ENCODE measurements at regions of chr2 and their contacts with region 1.

Region 1: GRCh38 chr2:73071360-73072133 is at the start of gene SFXN5:
- DNase-seq: peak; percentile 94
- ATAC-seq: peak; percentile 91
- H3K4me3 ChIP-seq: peak within 1 kb of the TSS; percentile 99
- H3K27ac ChIP-seq: peak within 1 kb of the TSS; percentile 63
- H3K4me1 ChIP-seq: peaks cover 22% of the 10 kb centered on the region
- H3K27me3 ChIP-seq: no peaks in the 10 kb centered on the region
- CTCF ChIP-seq: no peak
- total RNA-seq, gene SFXN5: 22.0 and 30.7 TPM in 2 replicates

Region 2: DNA sequence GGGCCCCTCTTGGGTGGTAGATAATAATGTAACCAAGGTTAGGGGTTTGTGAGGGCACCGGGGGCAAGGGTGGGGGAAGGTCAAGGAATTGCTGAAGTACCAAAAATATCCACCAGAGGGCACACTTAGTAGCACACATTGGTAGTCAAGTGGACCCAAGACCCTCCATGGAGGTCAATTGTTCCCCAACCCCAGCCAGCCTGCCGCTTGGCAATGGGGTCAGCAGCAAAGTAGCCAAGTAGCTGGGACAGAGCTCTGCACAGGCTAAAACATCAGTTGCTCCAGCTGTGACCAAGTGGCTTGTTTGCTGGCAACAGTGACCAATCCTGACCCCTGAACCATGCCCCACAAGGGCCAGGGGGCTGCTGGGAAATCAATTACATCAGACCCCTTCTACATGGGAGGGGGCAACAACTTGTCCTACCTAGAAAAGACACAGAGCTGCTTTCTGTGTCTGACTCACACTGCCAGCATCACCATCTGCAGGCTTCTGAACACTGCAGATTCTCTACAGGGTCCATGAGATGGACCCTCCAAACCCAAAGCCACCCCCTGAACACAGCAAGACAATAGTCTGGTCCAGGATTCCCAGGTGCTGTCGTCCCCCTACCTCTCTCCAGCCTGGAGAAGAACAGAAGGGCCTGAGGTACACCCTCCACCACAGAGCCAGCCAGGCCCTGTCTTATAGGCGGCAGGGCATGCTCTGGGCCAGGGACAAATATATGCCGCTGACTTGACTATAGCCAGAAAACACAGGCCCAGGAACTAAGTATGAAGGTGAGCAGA is 78.2 kb before region 1 on chr2:
- CTCF ChIA-PET with region 1: no interaction called
- POLR2A ChIA-PET with region 1: no interaction called
- intact Hi-C with region 1: loop called (anchors 2 kb)
- DNase-seq: peak; percentile 64
- ATAC-seq: peak; percentile 55; the same call in 1 of the 2 replicates
- H3K4me3 ChIP-seq: no peak overlapping the region
- H3K27ac ChIP-seq: no peak overlapping the region
- H3K4me1 ChIP-seq: no peaks in the 10 kb centered on the region
- H3K27me3 ChIP-seq: no peaks in the 10 kb centered on the region
- CTCF ChIP-seq: peak; percentile 88

Region 3: GRCh38 chr2:73013936-73014335 is 57.6 kb before region 1 on chr2:
- CTCF ChIA-PET with region 1: no interaction called
- POLR2A ChIA-PET with region 1: no interaction called
- intact Hi-C with region 1: loop called (anchors 5 kb)
- DNase-seq: peak; percentile 71
- ATAC-seq: peak; percentile 95
- H3K4me3 ChIP-seq: no peak overlapping the region
- H3K27ac ChIP-seq: 0 out of 2 replicates have a peak overlapping the region, but pooled peaks have one; percentile 0
- H3K4me1 ChIP-seq: peaks cover 15% of the 10 kb centered on the region
- H3K27me3 ChIP-seq: no peaks in the 10 kb centered on the region
- CTCF ChIP-seq: no peak

Region 4: DNA sequence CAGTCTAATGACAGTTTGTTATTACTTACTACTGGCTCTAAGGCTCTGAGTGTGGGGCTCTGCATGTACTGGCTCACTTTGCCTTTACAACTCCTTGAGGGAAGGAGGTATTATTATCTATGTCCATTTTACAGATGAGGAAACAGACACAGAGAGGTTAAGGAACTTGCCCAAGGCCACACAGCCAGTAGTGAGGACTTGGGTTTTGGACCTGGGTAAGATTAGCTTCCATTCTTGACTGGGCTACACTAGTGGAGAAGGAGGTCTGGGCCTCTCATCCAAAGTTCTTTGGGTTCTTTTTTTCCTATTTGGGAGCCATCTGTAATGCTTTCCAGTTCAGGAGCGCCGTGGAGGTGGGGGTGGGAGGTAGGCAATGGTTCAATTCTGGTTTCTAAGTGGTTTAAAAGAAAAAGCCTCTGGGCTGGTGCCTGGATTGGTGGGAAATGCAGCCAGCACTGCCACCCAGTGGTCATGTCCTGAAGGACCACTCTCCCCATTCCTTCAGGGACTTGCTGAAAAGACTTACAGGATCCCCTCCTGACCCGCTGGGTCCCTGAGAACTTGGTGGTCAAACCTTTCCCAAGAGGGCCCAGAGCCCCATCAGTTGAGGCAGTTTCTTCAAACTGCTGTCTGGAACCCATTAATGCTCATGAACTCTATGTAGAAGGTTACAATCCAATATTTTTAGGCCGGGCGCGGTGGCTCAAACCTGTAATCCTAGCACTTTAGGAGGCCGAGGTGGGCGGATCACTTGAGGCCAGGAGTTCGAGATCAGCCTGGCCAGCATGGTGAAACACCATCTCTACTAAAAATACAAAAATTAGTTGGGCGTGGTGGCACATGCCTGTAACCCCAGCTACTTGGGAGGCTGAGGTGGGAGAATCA is 92.2 kb after region 1 on chr2:
- CTCF ChIA-PET with region 1: interaction called, 10 read pairs
- POLR2A ChIA-PET with region 1: no interaction called
- intact Hi-C with region 1: no loop called
- DNase-seq: peak; percentile 81
- ATAC-seq: peak; percentile 96
- H3K4me3 ChIP-seq: no peak overlapping the region
- H3K27ac ChIP-seq: no peak overlapping the region
- H3K4me1 ChIP-seq: no peaks in the 10 kb centered on the region
- H3K27me3 ChIP-seq: no peaks in the 10 kb centered on the region
- CTCF ChIP-seq: peak; percentile 85

Region 5: GRCh38 chr2:73611867-73612266 is 540.3 kb after region 1 on chr2:
- CTCF ChIA-PET with region 1: no interaction called
- POLR2A ChIA-PET with region 1: no interaction called
- intact Hi-C with region 1: no loop called
- DNase-seq: peak; percentile 14
- ATAC-seq: no peak
- H3K4me3 ChIP-seq: no peak overlapping the region
- H3K27ac ChIP-seq: no peak overlapping the region
- H3K4me1 ChIP-seq: no peaks in the 10 kb centered on the region
- H3K27me3 ChIP-seq: no peaks in the 10 kb centered on the region
- CTCF ChIP-seq: no peak